Right ventricle myocardium superior (tissue), 1 donor: ENCODE measurements at regions of chr11 and their contacts with region 1.

Region 1: DNA sequence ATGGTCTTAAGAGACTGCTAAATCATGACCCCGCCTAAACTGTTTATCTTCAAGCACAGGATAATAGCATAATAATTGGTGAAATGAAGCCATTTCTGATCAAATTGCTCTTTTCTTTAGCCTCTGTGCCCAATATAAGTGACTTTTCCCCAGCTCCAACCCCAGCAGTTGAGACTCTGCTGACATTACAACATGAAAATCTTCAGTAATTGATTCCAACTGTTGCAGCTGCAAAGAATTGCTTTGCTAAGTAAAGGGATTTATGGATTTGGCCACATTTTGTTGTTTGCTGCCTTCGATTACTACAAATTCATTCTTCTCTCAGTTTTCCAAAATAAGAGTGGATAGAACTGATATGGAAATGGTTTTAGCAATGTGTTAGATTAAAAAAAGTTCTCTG is 576.7 kb upstream of the LRRC4C start:
- DNase-seq: no peak
- ATAC-seq: no peak

Region 2: GRCh38 chr11:42003801-42004200 is 32.4 kb before region 1 on chr11:
- intact Hi-C with region 1: loop called (anchors 5 kb)
- DNase-seq: no peak
- ATAC-seq: no peak

Region 3: GRCh38 chr11:42066113-42066512 is 29.9 kb after region 1 on chr11:
- intact Hi-C with region 1: no loop called
- DNase-seq: peak; percentile 58
- ATAC-seq: no peak